ENCODE measurements at regions of chr11 and their contacts with region 1.

Region 1: DNA sequence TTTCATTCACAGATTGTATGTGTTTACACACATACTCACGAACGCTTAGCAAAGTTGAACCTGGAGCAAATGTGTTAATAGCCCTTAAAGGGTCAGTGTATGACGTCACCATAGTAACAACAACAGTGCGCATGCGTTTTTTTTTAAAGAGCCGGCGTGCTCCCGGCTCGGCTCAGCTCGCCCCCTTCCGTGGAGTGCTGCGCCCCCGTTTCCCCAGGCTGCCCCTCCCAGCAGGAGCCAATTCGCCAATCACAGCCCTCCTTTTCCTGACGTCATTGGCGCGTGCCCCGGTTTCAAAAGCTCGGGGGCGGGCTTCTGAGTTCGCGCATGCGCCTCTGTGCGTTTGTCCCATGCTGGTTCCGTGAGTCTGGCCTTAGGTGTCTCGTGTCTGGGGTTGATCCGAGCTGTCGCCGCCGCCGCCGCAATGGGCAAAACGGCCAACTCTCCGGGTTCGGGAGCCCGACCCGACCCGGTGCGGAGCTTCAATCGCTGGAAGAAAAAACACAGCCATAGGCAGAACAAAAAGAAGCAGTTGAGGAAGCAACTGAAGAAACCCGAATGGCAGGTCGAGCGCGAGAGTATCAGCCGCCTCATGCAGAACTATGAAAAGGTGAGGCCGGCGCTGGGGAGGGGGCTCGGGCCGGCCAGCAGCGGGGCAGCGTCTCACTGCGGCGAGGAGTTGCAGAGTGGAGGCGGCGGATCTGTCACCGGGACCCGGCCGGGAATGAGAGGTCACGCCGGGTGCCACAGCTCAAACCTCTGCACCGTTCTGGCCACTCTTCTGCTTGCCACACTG is at the start of gene DDX10:
- DNase-seq: peak; percentile 98
- H3K4me3 Mint-ChIP-seq: peak within 1 kb of the TSS; percentile 100
- H3K27ac Mint-ChIP-seq: peak within 1 kb of the TSS; percentile 97
- H3K4me1 Mint-ChIP-seq: peaks cover 45% of the 10 kb centered on the region
- H3K27me3 Mint-ChIP-seq: peaks cover 7% of the 10 kb centered on the region
- total RNA-seq, gene DDX10: 68.4 and 68.8 TPM in 2 replicates

Region 2: GRCh38 chr11:107457558-107458271 is 1207.2 kb before region 1 on chr11 and contains the start of gene CWF19L2:
- intact Hi-C with region 1: loop called (anchors 10 kb)
- DNase-seq: peak; percentile 88
- H3K4me3 Mint-ChIP-seq: peak within 1 kb of the TSS; percentile 91
- H3K27ac Mint-ChIP-seq: peak within 1 kb of the TSS; percentile 87
- H3K4me1 Mint-ChIP-seq: peaks cover 28% of the 10 kb centered on the region
- H3K27me3 Mint-ChIP-seq: peaks cover 9% of the 10 kb centered on the region
- total RNA-seq, gene CWF19L2: 16.5 and 16.7 TPM in 2 replicates

Region 3: GRCh38 chr11:108121274-108122155 is 543.4 kb before region 1 on chr11 and contains the start of gene ACAT1:
- intact Hi-C with region 1: loop called (anchors 1 kb)
- DNase-seq: peak; percentile 95
- H3K4me3 Mint-ChIP-seq: peak within 1 kb of the TSS; percentile 97
- H3K27ac Mint-ChIP-seq: peak within 1 kb of the TSS; percentile 82
- H3K4me1 Mint-ChIP-seq: peaks cover 36% of the 10 kb centered on the region
- H3K27me3 Mint-ChIP-seq: no peaks in the 10 kb centered on the region
- total RNA-seq, gene ACAT1: 52.8 and 56.8 TPM in 2 replicates

Region 4: DNA sequence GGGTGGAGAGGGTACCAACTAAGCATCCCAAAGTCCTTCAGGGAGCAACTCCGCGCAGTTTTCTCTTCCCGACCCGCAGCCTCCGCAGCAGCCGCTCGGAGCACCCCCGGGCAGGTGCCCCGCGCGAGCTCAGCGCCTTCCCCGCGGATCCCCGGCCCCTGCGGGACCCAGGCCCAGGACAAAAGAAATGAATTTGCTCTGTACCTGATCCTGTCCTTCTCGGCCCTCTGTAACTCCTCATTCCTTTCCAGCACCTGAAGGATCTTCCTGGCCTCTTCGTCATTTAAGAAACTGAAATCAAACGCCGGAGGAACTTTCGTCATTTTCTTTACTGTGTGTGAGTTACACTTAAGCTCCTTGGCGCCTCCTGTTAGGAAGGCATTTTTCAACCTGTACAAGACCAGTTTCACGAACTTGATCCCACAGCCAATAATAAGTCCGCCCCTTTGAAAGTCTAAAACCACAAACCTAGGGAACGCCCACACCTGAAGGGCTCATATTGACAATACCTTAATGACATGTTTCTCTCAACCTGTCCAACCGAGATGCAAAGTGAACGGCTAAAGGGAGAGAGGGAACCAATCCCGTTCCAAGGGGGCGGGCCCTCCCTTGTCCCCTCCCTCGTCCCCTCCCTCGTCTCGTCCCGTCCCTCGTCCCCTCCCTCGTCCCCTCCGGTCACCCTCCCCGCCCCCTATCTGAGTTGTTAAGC is 71.6 kb before region 1 on chr11 and contains the start of gene EXPH5:
- intact Hi-C with region 1: loop called (anchors 2 kb)
- DNase-seq: peak; percentile 76
- H3K4me3 Mint-ChIP-seq: peak within 1 kb of the TSS; percentile 89
- H3K27ac Mint-ChIP-seq: peak within 1 kb of the TSS; percentile 75
- H3K4me1 Mint-ChIP-seq: peaks cover 23% of the 10 kb centered on the region
- H3K27me3 Mint-ChIP-seq: peaks cover 29% of the 10 kb centered on the region
- total RNA-seq, gene EXPH5: 0.56 and 0.65 TPM in 2 replicates

Region 5: GRCh38 chr11:108620958-108621772 is 43.8 kb before region 1 on chr11:
- intact Hi-C with region 1: loop called (anchors 1 kb)
- DNase-seq: no peak
- H3K4me3 Mint-ChIP-seq: no peak overlapping the region
- H3K27ac Mint-ChIP-seq: no peak overlapping the region
- H3K4me1 Mint-ChIP-seq: peaks cover 18% of the 10 kb centered on the region
- H3K27me3 Mint-ChIP-seq: peaks cover 7% of the 10 kb centered on the region

Region 6: GRCh38 chr11:108727665-108728064 is 62.7 kb after region 1 on chr11:
- intact Hi-C with region 1: loop called (anchors 2 kb)
- DNase-seq: no peak
- H3K4me3 Mint-ChIP-seq: peak overlapping the region; percentile 5
- H3K27ac Mint-ChIP-seq: peak overlapping the region; percentile 19
- H3K4me1 Mint-ChIP-seq: peaks cover 47% of the 10 kb centered on the region
- H3K27me3 Mint-ChIP-seq: no peaks in the 10 kb centered on the region

Measured in activated T-helper 1 cell treated with anti-CD3 and anti-CD28 coated beads, Interleukin-12 subunit alpha, Interleukin-12 subunit beta, Interleukin-2, Interleukin-4 antibody, amounts not matched to agents 30 ng/mL and 10 ng/mL and 1 ng/mL, durations not matched to agents 14 hours and 24 hours and 36 hours (primary cell).